Esophagus squamous epithelium (tissue), 5 donors: ENCODE measurements at regions of chr1 and their contacts with region 1.

Region 1: DNA sequence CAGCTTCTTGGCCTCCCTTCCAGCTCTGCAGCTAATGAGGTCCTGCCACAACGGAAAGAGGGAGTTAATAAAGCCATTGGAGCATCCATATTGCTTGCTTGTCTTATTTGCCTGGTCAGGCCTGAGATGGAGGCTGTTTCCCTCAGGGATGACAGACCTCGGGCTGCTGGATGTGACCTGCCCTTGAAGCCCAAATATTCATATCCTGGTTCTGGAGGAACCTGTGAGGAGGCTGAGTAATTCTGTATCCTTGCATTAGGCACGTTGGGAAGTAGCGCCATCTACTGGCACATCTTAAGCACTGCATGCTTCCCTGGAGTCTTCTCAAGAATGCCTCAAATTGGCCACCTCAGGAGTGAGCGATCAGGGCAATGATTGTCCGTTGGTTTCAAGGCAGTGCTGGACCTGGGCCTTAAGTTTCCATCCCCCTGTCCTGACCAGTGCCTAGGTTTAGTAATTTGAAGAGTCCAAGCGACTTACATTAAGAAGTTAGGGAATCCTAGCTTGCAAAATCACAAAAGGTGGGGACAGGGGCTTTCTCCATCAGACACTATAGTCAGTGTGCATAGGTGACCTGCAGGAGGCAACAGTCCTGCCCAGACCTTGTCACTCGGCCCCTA is 13.8 kb upstream of the NASP start:
- DNase-seq: no peak
- H3K4me3 ChIP-seq: no peak overlapping the region
- H3K27ac ChIP-seq: peak overlapping the region in 3 of 4 donors; percentile 40 to 60 (median 50)
- H3K4me1 ChIP-seq: peaks cover 3 to 44% (median 10%) of the 10 kb centered on the region in 3 donors
- H3K27me3 ChIP-seq: no peaks in the 10 kb centered on the region
- CTCF ChIP-seq: peak; percentile 93 to 99 (median 98)
- POLR2A ChIP-seq: no peak

Region 2: GRCh38 chr1:45339789-45340570 is 230.1 kb before region 1 on chr1 and contains the starts of genes MUTYH and TOE1:
- intact Hi-C with region 1: loop called (anchors 10 kb)
- DNase-seq: peak; percentile 70
- H3K4me3 ChIP-seq: peak within 1 kb of the TSS; percentile 68 to 91 (median 78)
- H3K27ac ChIP-seq: peak within 1 kb of the TSS; percentile 92 to 98 (median 96)
- H3K4me1 ChIP-seq: peaks cover 11 to 41% (median 16%) of the 10 kb centered on the region in 3 donors
- H3K27me3 ChIP-seq: no peaks in the 10 kb centered on the region
- CTCF ChIP-seq: peak in 1 of 6 experiments; percentile 8
- POLR2A ChIP-seq: peak in 3 of 4 donors; percentile 7 to 76 (median 60)
- total RNA-seq, gene MUTYH: 8.4 to 23.5 (median 19.1) TPM
- total RNA-seq, gene TOE1: 6.4 to 11.4 (median 9.1) TPM

Region 3: GRCh38 chr1:45508295-45509151 is 61.5 kb before region 1 on chr1:
- intact Hi-C with region 1: loop called (anchors 5 kb)
- DNase-seq: no peak
- H3K4me3 ChIP-seq: no peak overlapping the region
- H3K27ac ChIP-seq: peak overlapping the region in 3 of 4 donors; percentile 5 to 40 (median 22)
- H3K4me1 ChIP-seq: peaks cover 0 to 21% (median 4%) of the 10 kb centered on the region in 3 donors
- H3K27me3 ChIP-seq: no peaks in the 10 kb centered on the region
- CTCF ChIP-seq: peak in 2 of 6 experiments; percentile 24 to 46
- POLR2A ChIP-seq: no peak